ENCODE measurements at regions of chr14 and their contacts with region 1.

Region 1: DNA sequence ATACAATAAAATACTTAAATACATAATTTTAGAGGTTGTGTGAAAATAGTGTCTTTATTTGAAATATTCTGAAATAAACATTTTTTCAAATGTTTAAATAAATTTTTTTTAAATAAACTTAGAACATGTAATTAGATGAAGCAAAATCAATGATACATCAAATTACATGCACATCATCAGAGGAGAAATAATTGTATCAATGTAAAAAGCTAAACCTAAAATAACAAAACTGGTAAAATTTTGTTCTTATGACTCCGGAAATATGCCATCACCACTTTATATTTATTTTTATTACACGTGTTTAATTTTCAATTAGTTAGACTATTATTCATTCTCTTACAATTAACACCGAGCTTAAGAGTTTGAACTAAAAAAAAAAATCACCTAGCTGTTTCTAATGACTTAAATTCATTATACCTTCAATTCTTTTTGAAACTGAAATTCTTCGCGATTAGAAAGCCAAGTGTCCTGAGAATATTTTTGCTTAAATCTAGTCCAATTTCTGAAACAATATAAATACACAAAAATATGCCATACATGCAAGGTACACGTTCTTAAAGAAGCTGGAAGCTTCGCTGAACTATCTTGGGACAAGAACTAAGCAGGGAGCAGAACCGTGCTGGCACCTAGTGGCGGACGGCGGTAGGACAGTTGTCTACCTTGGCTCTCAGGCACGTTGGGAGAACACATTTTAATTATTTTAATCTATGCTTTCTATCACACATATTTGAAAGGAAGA is 230.5 kb downstream of the SLC25A21 start:
- H3K4me3 ChIP-seq: no peak overlapping the region
- H3K27ac ChIP-seq: no peak overlapping the region
- H3K4me1 ChIP-seq: peaks cover 13% of the 10 kb centered on the region
- CTCF ChIP-seq: peak; percentile 66

Region 2: GRCh38 chr14:36604757-36605505 is 337.0 kb before region 1 on chr14:
- CTCF ChIA-PET with region 1: interaction called, 10 read pairs
- POLR2A ChIA-PET with region 1: no interaction called
- H3K4me3 ChIP-seq: no peak overlapping the region
- H3K27ac ChIP-seq: no peak overlapping the region
- H3K4me1 ChIP-seq: no peaks in the 10 kb centered on the region
- CTCF ChIP-seq: peak; percentile 58; the same call in 1 of the 2 replicates

Region 3: DNA sequence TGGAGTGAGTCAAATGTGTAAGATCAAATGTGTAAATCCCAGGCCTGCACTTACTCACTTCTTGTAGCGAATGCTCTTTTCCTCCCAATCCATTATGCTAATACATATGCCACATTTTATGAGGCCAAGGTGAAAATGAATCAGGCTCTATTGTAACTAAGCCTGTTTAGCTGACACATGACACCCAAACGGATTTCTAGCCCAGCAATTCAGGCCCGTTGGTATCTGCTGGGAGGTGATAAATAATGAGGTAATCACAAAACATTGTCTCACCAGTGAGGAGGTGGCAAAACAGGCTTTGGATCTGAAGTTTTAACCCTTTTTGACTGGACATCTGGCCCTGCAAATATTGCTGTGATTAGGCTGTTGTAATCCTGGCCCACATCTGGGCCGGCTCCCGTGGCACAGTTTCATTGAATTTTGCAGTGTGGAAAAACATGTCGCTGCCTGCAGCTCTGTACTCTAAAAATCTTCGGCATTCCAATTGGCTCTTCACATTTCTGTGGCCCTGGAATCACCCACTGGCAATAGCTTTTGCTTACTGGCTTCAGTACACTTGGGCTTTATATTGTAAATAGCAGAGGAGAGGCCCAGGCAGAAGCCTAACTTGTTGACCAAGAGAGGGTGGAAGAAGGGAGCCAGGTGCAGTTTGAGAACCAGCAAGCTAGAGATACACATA is 174.2 kb before region 1 on chr14:
- CTCF ChIA-PET with region 1: interaction called, 15 read pairs
- POLR2A ChIA-PET with region 1: no interaction called
- H3K4me3 ChIP-seq: no peak overlapping the region
- H3K27ac ChIP-seq: peak overlapping the region; percentile 90
- H3K4me1 ChIP-seq: peaks cover 38% of the 10 kb centered on the region
- CTCF ChIP-seq: no peak

Region 4: DNA sequence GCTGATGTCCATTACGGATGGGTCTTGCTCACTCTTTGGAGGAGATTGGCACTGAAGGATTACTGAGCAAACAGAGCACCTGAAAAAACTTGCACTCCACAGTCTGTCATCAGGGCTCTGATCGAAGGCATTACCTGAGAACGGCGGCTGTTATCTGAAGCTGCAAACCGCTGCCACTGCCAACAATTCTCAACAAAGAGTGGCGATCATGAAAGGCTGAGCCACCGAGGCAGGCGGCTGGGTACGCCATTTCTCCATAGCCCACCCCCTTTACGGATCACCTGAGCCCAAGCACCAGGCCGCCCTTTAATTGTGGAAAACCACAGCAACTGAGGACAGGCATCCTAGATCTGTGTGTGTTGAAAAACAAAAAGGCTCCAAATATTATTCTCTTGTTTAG is 153.7 kb before region 1 on chr14:
- CTCF ChIA-PET with region 1: no interaction called
- POLR2A ChIA-PET with region 1: no interaction called
- H3K4me3 ChIP-seq: no peak overlapping the region
- H3K27ac ChIP-seq: peak overlapping the region; percentile 6; the same call in 1 of the 2 replicates
- H3K4me1 ChIP-seq: peaks cover 8% of the 10 kb centered on the region
- CTCF ChIP-seq: no peak

Region 5: GRCh38 chr14:36931796-36932195 is 10.2 kb before region 1 on chr14:
- CTCF ChIA-PET with region 1: interaction called, 15 read pairs
- POLR2A ChIA-PET with region 1: no interaction called
- H3K4me3 ChIP-seq: no peak overlapping the region
- H3K27ac ChIP-seq: no peak overlapping the region
- H3K4me1 ChIP-seq: peaks cover 57% of the 10 kb centered on the region
- CTCF ChIP-seq: no peak

Region 6: DNA sequence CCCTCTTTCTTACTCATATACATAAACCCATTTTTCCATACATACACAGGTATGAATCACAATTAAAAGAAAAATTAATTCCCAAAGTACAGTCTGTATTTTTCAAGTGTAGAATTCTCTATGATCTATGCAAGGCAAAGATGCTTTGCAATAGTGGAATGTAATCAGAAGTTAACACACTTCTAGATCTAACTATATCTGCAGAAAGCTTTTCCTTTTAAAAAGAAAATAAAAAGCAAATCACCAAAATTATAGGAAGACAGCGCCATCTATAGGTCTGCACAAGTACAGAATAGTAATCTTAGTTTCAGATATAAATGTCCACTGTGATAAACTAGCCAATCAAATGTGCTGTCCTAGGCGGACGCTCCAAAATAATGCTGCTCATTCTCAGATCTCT is 208.5 kb after region 1 on chr14:
- CTCF ChIA-PET with region 1: interaction called, 14 read pairs
- POLR2A ChIA-PET with region 1: no interaction called
- H3K4me3 ChIP-seq: no peak overlapping the region; the same call in 1 of the 2 replicates
- H3K27ac ChIP-seq: no peak overlapping the region
- H3K4me1 ChIP-seq: peaks cover 6% of the 10 kb centered on the region; the same call in 1 of the 2 replicates
- CTCF ChIP-seq: peak; percentile 19; the same call in 1 of the 2 replicates